Calu3 (cell line): ENCODE measurements at regions of chr12 and their contacts with region 1.

Region 1: DNA sequence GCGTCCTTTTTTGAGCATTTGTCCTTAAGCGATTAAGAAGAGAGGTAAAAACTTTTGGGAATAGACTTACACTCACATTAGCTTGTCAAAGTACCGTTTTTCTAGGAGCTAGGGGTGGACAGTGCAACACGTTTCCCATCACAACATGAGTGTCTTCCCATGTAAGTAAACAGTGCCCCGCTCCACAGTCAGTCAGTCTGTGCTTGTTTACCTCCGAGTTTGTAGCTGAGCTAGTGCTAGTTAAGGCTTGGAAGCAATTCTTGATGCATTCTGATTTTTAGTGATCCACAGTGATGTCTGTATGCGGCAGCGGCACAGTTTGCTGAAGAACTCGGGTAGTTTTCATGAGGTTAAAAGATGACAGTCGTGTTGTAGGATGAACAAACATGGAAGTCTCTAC is 936 bp downstream of the ZDHHC17 start:
- DNase-seq: no peak
- H3K4me3 Mint-ChIP-seq: peak overlapping the region; percentile 96
- H3K27ac Mint-ChIP-seq: peak overlapping the region; percentile 88
- H3K4me1 Mint-ChIP-seq: peaks cover 11% of the 10 kb centered on the region
- H3K27me3 Mint-ChIP-seq: no peaks in the 10 kb centered on the region
- CTCF ChIP-seq: no peak

Region 2: GRCh38 chr12:76720068-76720467 is 44.8 kb before region 1 on chr12:
- CTCF ChIA-PET with region 1: no interaction called
- intact Hi-C with region 1: loop called (anchors 1 kb)
- DNase-seq: no peak
- H3K4me3 Mint-ChIP-seq: no peak overlapping the region
- H3K27ac Mint-ChIP-seq: no peak overlapping the region
- H3K4me1 Mint-ChIP-seq: peaks cover 8% of the 10 kb centered on the region
- H3K27me3 Mint-ChIP-seq: no peaks in the 10 kb centered on the region
- CTCF ChIP-seq: no peak

Region 3: DNA sequence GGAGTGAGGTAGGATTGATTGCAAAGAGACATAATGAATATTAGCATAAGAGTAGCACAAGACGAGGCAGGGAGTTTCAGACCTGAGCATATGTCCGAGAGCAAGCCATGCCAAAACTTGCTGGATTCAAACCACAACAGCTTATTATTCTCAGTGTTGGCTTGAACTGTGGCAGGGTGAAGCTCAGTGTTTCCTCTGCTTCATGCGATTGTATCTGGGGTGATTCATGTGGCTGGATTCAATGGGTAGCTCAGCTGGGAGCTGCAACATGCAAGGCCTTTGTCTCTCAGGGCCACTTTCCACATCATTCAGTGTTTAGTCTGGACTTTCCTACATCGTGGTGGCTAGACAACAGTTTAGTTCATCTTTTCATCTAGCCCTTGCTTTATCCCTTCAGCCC is 322.6 kb after region 1 on chr12:
- CTCF ChIA-PET with region 1: no interaction called
- intact Hi-C with region 1: no loop called
- DNase-seq: no peak
- H3K4me3 Mint-ChIP-seq: no peak overlapping the region
- H3K27ac Mint-ChIP-seq: no peak overlapping the region
- H3K4me1 Mint-ChIP-seq: peaks cover 6% of the 10 kb centered on the region
- H3K27me3 Mint-ChIP-seq: no peaks in the 10 kb centered on the region
- CTCF ChIP-seq: no peak